ENCODE measurements at regions of chr2 and their contacts with region 1.

Region 1: GRCh38 chr2:132715386-132716351 is 45.7 kb upstream of the LYPD1 start:
- DNase-seq: no peak
- ATAC-seq: peak in 2 of 4 donors; percentile 18 to 36
- H3K4me3 ChIP-seq: no peak overlapping the region
- H3K27ac ChIP-seq: no peak overlapping the region
- H3K4me1 ChIP-seq: no peaks in the 10 kb centered on the region
- H3K27me3 ChIP-seq: no peaks in the 10 kb centered on the region
- CTCF ChIP-seq: no peak
- POLR2A ChIP-seq: no peak

Region 2: GRCh38 chr2:132645722-132646535 is 69.7 kb before region 1 on chr2:
- intact Hi-C with region 1: no loop called
- DNase-seq: no peak
- ATAC-seq: peak in 1 of 4 donors; percentile 49
- H3K4me3 ChIP-seq: no peak overlapping the region
- H3K27ac ChIP-seq: no peak overlapping the region
- H3K4me1 ChIP-seq: no peaks in the 10 kb centered on the region
- H3K27me3 ChIP-seq: peaks cover 0 to 22% (median 0%) of the 10 kb centered on the region in 9 donors
- CTCF ChIP-seq: no peak
- POLR2A ChIP-seq: no peak

Region 3: DNA sequence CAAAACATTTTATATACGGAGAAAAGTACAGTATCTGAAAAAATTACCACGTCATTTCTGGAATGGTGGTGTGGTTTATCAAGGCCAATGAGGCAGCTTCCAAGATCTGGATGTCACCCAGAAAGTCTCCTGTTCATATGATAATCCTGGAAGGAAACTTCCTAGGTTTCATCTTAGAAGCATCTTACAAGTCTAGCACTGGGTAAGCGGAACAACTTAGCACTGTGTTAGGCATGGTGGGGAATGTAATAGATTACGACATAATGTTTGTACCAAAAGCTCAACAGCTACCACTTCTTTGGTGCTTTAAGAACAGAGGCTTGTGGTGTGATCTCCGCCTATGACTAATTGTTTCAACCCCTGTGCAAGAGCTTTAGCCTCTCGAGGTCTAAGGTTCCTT is 17.4 kb after region 1 on chr2:
- intact Hi-C with region 1: no loop called
- DNase-seq: no peak
- ATAC-seq: no peak
- H3K4me3 ChIP-seq: no peak overlapping the region
- H3K27ac ChIP-seq: no peak overlapping the region
- H3K4me1 ChIP-seq: no peaks in the 10 kb centered on the region
- H3K27me3 ChIP-seq: no peaks in the 10 kb centered on the region
- CTCF ChIP-seq: no peak
- POLR2A ChIP-seq: no peak

Region 4: GRCh38 chr2:132766573-132766972 is 50.9 kb after region 1 on chr2:
- intact Hi-C with region 1: loop called in 1 of 10 experiments (anchors 5 kb)
- DNase-seq: no peak
- ATAC-seq: no peak
- H3K4me3 ChIP-seq: no peak overlapping the region
- H3K27ac ChIP-seq: no peak overlapping the region
- H3K4me1 ChIP-seq: no peaks in the 10 kb centered on the region
- H3K27me3 ChIP-seq: no peaks in the 10 kb centered on the region
- CTCF ChIP-seq: no peak
- POLR2A ChIP-seq: no peak

Measured in heart left ventricle (tissue), 16 donors.